IMR-90 (cell line): ENCODE measurements at regions of chr1 and their contacts with region 1.

Region 1: GRCh38 chr1:904310-904950 is 19.3 kb upstream of the SAMD11 start:
- DNase-seq: peak; percentile 69
- ATAC-seq: peak; percentile 89
- H3K4me3 ChIP-seq: peak overlapping the region; percentile 48
- H3K27ac ChIP-seq: no peak overlapping the region; the same call in 1 of the 2 replicates
- H3K4me1 ChIP-seq: peaks cover 17% of the 10 kb centered on the region
- H3K27me3 ChIP-seq: peaks cover 8% of the 10 kb centered on the region; the same call in 1 of the 2 replicates
- CTCF ChIP-seq: peak; percentile 97
- POLR2A ChIP-seq: peak; percentile 71; the same call in 1 of the 2 replicates
- RAD21 ChIP-seq: peak; percentile 85

Region 2: GRCh38 chr1:844472-845026 is 59.9 kb before region 1 on chr1:
- CTCF ChIA-PET with region 1: no interaction called
- POLR2A ChIA-PET with region 1: no interaction called
- dilution Hi-C with region 1: no loop called
- in situ Hi-C with region 1: no loop called
- intact Hi-C with region 1: no loop called
- DNase-seq: no peak
- ATAC-seq: no peak
- H3K4me3 ChIP-seq: no peak overlapping the region
- H3K27ac ChIP-seq: no peak overlapping the region
- H3K4me1 ChIP-seq: no peaks in the 10 kb centered on the region
- H3K27me3 ChIP-seq: no peaks in the 10 kb centered on the region
- CTCF ChIP-seq: no peak
- POLR2A ChIP-seq: no peak
- RAD21 ChIP-seq: no peak

Region 3: GRCh38 chr1:941588-942383 is 37.4 kb after region 1 on chr1:
- CTCF ChIA-PET with region 1: interaction called, 4 read pairs
- POLR2A ChIA-PET with region 1: no interaction called
- dilution Hi-C with region 1: no loop called
- in situ Hi-C with region 1: no loop called
- intact Hi-C with region 1: loop called (anchors 1 kb)
- DNase-seq: peak; percentile 51
- ATAC-seq: peak; percentile 42
- H3K4me3 ChIP-seq: peak overlapping the region; percentile 42
- H3K27ac ChIP-seq: peak overlapping the region; percentile 43
- H3K4me1 ChIP-seq: peaks cover 52% of the 10 kb centered on the region
- H3K27me3 ChIP-seq: no peaks in the 10 kb centered on the region
- CTCF ChIP-seq: no peak
- POLR2A ChIP-seq: no peak
- RAD21 ChIP-seq: no peak

Region 4: GRCh38 chr1:951364-951763 is 46.9 kb after region 1 on chr1:
- CTCF ChIA-PET with region 1: no interaction called
- POLR2A ChIA-PET with region 1: no interaction called
- dilution Hi-C with region 1: no loop called
- in situ Hi-C with region 1: no loop called
- intact Hi-C with region 1: loop called (anchors 1 kb)
- DNase-seq: peak; percentile 32
- ATAC-seq: peak; percentile 65
- H3K4me3 ChIP-seq: no peak overlapping the region
- H3K27ac ChIP-seq: no peak overlapping the region
- H3K4me1 ChIP-seq: no peaks in the 10 kb centered on the region
- H3K27me3 ChIP-seq: no peaks in the 10 kb centered on the region
- CTCF ChIP-seq: peak; percentile 40
- POLR2A ChIP-seq: no peak
- RAD21 ChIP-seq: peak; percentile 46

Region 5: GRCh38 chr1:975896-976683 is 71.7 kb after region 1 on chr1:
- CTCF ChIA-PET with region 1: no interaction called
- POLR2A ChIA-PET with region 1: no interaction called
- dilution Hi-C with region 1: no loop called
- in situ Hi-C with region 1: no loop called
- intact Hi-C with region 1: loop called (anchors 5 kb)
- DNase-seq: peak; percentile 36
- ATAC-seq: peak; percentile 95
- H3K4me3 ChIP-seq: peak overlapping the region; percentile 0; the same call in 1 of the 2 replicates
- H3K27ac ChIP-seq: no peak overlapping the region
- H3K4me1 ChIP-seq: 0 out of 2 replicates have a peak, but pooled peaks cover 2% of the 10 kb centered on the region
- H3K27me3 ChIP-seq: no peaks in the 10 kb centered on the region
- CTCF ChIP-seq: peak; percentile 65
- POLR2A ChIP-seq: no peak
- RAD21 ChIP-seq: peak; percentile 71

Region 6: DNA sequence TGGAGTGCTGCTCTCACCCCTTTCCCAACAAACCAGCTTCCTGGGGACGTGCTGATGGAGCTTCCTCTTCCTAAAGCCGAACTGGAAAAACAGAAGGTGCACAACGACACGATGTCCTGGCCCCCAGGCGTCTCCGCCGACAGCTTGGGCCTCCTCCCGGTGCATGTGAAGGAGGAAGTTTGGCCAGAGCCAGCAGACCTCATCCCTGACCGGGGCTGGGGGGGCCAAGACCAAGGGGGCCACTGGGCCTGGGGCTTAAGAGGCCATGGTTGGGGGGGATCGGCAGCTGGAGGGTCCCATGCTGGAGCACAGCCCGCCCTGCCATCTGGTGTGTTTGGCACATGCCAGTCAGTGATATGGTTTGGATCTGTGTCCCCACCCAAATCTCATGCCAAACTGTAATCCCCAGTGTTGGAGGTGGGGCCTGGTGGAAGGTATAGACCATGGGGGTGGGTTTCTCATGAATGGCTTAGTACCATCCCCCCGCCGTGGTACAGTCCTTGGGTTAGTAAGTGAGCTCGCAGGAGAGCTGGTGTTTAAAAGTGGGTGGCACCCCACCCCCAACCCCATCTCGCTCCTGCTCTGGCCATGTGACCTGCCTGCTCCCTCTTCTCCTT is 89.1 kb after region 1 on chr1:
- CTCF ChIA-PET with region 1: no interaction called
- POLR2A ChIA-PET with region 1: interaction called, 13 read pairs
- dilution Hi-C with region 1: no loop called
- in situ Hi-C with region 1: no loop called
- intact Hi-C with region 1: no loop called
- DNase-seq: peak; percentile 25
- ATAC-seq: no peak
- H3K4me3 ChIP-seq: no peak overlapping the region
- H3K27ac ChIP-seq: no peak overlapping the region
- H3K4me1 ChIP-seq: peaks cover 4% of the 10 kb centered on the region; the same call in 1 of the 2 replicates
- H3K27me3 ChIP-seq: no peaks in the 10 kb centered on the region
- CTCF ChIP-seq: no peak
- POLR2A ChIP-seq: peak; percentile 86
- RAD21 ChIP-seq: no peak